Activated B cell treated with CpG ODN at 0.5 μM for 24 hours (primary cell): ENCODE measurements at regions of chr4 and their contacts with region 1.

Region 1: DNA sequence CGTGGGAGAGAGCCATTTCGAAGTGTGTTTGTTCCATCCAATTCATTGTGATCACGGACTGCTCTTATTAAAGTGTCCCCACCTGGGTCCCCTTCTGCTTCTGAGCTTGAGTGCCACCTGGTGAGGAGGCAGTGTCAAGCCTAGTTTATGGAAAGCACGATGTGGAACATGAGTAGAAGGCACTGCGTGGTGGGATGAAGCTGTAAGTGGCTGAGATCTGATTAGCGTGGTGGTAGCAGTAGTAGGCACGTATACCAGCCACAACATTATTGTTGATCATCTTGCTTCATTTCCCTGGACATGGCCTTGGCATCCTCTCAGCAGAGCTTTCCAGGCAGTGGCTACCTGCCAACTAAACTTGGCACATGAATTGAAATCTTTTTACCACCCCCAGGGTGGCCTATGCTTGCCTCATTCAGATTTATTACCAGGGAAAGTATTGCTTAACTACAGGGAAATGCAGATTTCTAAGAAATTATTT is 46.4 kb downstream of the GPAT3 start:
- DNase-seq: peak; percentile 26
- ATAC-seq: peak; percentile 65
- H3K4me3 Mint-ChIP-seq: peak overlapping the region; percentile 75
- H3K27ac Mint-ChIP-seq: peak overlapping the region; percentile 83
- H3K4me1 Mint-ChIP-seq: peaks cover 21% of the 10 kb centered on the region
- H3K27me3 Mint-ChIP-seq: no peaks in the 10 kb centered on the region
- CTCF ChIP-seq: no peak

Region 2: DNA sequence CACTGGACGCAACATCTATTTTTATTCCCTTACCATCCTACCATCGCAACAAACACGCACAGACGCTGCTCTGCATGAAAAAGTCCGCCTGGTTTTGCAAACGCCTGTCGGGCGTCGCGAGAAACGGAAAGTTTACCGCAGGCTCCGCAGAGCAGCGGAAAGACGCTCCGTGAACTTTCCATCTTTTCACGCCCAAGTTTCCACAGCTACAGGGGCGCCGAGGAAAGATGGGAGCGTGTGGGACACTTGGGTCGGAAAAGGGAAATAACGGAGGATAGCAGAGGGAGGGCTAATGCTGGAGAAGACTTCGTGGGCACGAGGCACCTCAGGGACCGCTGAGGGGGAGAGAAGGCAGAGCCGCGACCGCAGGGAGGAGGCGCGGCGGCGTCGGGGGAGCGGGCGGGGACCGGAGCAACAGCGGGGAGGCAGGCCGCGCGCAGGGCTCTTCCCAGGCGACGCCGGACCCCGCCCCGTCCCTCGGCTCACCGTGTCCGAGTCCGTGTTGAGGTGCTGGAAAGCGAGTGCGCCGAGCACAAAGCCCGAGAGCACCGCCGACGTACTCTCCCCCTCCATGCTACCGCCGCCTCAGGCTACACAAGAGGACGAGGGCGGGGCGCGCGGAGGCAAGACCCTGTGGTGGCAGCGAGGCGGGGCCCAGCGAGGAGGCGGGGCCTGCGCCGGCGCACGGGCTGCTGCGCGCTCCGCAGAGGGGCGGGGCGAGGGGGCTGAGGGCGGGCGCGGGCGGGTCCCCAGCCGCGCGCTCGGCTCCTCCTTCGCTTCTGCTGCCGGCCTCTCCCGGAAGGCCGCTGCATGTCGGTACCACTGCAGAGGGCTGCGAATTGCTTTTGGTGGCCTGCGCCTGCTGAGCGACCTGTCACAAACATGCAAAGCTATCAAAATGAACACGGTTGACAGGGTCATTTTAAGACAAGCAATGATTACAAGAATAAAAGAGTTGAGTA is 97.5 kb before region 1 on chr4 and contains the start of gene ABRAXAS1:
- CTCF ChIA-PET with region 1: interaction called, 4 read pairs
- POLR2A ChIA-PET with region 1: interaction called, 8 read pairs
- intact Hi-C with region 1: loop called (anchors 1 kb)
- DNase-seq: peak; percentile 96
- ATAC-seq: peak; percentile 97
- H3K4me3 Mint-ChIP-seq: peak within 1 kb of the TSS; percentile 93
- H3K27ac Mint-ChIP-seq: peak within 1 kb of the TSS; percentile 94
- H3K4me1 Mint-ChIP-seq: peaks cover 19% of the 10 kb centered on the region
- H3K27me3 Mint-ChIP-seq: no peaks in the 10 kb centered on the region
- CTCF ChIP-seq: no peak
- total RNA-seq, gene ABRAXAS1: 23.5 and 24.2 TPM in 2 replicates

Region 3: DNA sequence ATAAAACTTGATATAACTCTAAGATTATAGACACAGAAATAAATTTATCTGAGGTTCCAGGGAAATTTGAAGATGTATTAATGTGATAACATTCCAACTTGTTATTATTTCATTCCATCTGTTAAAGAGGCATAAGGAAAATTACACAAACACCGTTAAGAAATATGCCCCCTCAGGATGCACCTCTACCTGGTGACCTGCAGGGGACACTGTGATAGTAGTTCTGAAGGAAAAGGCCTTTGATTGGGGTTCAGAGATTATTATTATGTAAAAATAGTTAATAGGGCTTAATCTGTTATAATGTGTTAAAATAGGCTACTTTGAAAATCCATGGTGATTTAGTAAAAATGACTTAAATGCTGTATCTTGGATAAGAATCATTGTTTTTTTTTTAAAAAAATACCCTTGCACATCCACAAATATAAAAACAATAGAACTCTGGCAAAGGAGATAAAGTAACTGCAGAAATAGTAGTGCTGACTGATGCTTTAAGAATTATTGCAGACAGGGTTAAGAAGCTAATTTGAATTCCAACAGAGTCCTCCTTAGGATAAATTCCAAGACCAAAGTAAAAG is 91.4 kb before region 1 on chr4:
- CTCF ChIA-PET with region 1: interaction called, 5 read pairs
- POLR2A ChIA-PET with region 1: interaction called, 8 read pairs
- intact Hi-C with region 1: loop called (anchors 1 kb)
- DNase-seq: no peak
- ATAC-seq: peak; percentile 68
- H3K4me3 Mint-ChIP-seq: no peak overlapping the region
- H3K27ac Mint-ChIP-seq: no peak overlapping the region
- H3K4me1 Mint-ChIP-seq: peaks cover 1% of the 10 kb centered on the region
- H3K27me3 Mint-ChIP-seq: no peaks in the 10 kb centered on the region
- CTCF ChIP-seq: peak; percentile 80

Region 4: DNA sequence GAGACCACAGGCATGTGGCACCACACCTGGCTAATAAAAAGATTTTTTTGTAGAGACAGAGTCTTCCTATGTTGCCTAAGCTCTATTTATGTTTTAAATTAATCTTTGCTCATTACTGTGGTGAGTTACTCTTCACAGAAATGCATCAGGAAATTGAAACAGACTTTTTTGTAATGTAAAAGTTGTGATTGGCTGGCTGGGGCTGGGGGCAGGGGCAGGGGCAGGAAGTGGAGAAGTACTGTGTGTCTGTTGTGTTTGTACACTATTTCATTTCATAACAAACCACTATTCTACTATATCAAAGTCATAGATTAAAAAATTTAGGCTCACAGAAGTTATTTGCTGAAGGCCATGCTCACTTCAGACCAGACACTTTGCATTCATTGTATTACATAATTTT is 78.4 kb before region 1 on chr4:
- CTCF ChIA-PET with region 1: interaction called, 3 read pairs
- POLR2A ChIA-PET with region 1: no interaction called
- intact Hi-C with region 1: loop called (anchors 1 kb)
- DNase-seq: no peak
- ATAC-seq: no peak
- H3K4me3 Mint-ChIP-seq: no peak overlapping the region
- H3K27ac Mint-ChIP-seq: no peak overlapping the region
- H3K4me1 Mint-ChIP-seq: no peaks in the 10 kb centered on the region
- H3K27me3 Mint-ChIP-seq: no peaks in the 10 kb centered on the region
- CTCF ChIP-seq: no peak

Region 5: DNA sequence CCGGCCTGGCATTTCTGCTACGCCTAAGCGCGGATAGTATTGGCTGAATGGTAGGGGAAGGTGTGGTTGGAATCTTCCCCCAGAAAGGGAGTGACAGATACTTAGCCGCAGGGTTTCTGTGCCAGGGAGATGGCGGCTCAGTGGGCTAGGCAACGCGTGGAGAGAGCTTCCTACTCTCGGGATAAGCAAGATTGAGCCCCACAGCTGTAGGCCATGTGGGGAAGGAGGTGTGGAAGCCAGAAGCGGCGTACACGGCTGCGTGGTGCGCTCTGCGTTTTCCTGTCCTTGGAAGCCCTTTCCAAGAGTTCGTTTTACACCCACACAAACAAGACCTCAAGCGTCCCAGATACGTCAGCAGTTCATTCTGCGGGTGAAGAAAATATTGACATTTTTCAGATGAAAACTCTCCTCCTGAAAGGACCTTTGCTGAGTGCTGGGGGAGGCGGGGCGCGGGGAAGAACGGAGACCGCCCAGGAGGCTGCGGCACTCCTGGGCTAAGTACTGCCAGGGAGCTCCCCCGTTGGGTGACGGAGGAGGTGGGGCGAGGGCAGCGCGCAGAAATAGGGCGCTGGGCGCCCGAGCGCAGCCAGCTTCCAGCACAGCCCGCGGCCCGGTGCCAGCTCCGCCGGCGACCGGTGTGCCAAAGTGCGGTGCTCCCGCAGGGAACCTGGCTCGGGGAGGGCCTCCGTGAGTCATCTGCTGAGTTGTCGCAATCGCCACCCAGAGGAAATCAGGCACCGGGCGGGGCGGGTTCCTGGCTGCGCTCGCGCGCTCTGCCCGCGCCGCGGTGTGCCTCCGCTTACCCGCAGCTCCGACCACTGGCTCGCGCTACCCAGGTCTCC is 46.6 kb before region 1 on chr4 and contains the start of gene GPAT3:
- CTCF ChIA-PET with region 1: interaction called, 3 read pairs
- POLR2A ChIA-PET with region 1: interaction called, 22 read pairs
- intact Hi-C with region 1: loop called (anchors 1 kb)
- DNase-seq: peak; percentile 54
- ATAC-seq: peak; percentile 80
- H3K4me3 Mint-ChIP-seq: peak within 1 kb of the TSS; percentile 88
- H3K27ac Mint-ChIP-seq: peak within 1 kb of the TSS; percentile 68
- H3K4me1 Mint-ChIP-seq: peaks cover 16% of the 10 kb centered on the region
- H3K27me3 Mint-ChIP-seq: peaks cover 43% of the 10 kb centered on the region
- CTCF ChIP-seq: no peak
- total RNA-seq, gene GPAT3: 0.76 and 0.91 TPM in 2 replicates

Region 6: DNA sequence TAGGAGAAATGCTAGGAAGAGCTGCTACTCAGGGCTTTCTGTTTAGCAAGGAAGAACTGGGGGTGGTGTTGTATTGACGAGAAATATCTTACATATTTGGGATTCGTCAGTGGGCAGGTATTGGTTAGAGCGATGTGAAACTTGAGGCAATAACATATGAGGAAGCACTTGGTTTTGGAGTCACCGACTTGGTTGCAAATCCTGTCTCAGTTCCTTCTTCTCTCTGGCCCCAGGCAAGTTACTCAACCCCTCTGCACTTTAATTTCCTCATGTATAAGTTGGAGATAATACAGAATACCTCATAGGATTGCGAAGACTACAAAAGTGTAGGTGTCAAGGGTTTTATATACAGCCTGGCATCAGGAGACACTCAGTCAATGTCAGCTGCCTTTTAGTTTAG is 12.3 kb before region 1 on chr4:
- CTCF ChIA-PET with region 1: interaction called, 9 read pairs
- POLR2A ChIA-PET with region 1: interaction called, 14 read pairs
- intact Hi-C with region 1: loop called (anchors 1 kb)
- DNase-seq: no peak
- ATAC-seq: peak; percentile 95
- H3K4me3 Mint-ChIP-seq: no peak overlapping the region
- H3K27ac Mint-ChIP-seq: no peak overlapping the region
- H3K4me1 Mint-ChIP-seq: peaks cover 16% of the 10 kb centered on the region
- H3K27me3 Mint-ChIP-seq: no peaks in the 10 kb centered on the region
- CTCF ChIP-seq: no peak

Region 7: GRCh38 chr4:83771113-83771705 is 188.9 kb after region 1 on chr4:
- CTCF ChIA-PET with region 1: no interaction called
- POLR2A ChIA-PET with region 1: no interaction called
- intact Hi-C with region 1: no loop called
- DNase-seq: no peak
- ATAC-seq: no peak
- H3K4me3 Mint-ChIP-seq: no peak overlapping the region
- H3K27ac Mint-ChIP-seq: no peak overlapping the region
- H3K4me1 Mint-ChIP-seq: no peaks in the 10 kb centered on the region
- H3K27me3 Mint-ChIP-seq: peaks cover 6% of the 10 kb centered on the region
- CTCF ChIP-seq: no peak